Kidney (tissue), 22 donors: ENCODE measurements at regions of chr5 and their contacts with region 1.

Region 1: DNA sequence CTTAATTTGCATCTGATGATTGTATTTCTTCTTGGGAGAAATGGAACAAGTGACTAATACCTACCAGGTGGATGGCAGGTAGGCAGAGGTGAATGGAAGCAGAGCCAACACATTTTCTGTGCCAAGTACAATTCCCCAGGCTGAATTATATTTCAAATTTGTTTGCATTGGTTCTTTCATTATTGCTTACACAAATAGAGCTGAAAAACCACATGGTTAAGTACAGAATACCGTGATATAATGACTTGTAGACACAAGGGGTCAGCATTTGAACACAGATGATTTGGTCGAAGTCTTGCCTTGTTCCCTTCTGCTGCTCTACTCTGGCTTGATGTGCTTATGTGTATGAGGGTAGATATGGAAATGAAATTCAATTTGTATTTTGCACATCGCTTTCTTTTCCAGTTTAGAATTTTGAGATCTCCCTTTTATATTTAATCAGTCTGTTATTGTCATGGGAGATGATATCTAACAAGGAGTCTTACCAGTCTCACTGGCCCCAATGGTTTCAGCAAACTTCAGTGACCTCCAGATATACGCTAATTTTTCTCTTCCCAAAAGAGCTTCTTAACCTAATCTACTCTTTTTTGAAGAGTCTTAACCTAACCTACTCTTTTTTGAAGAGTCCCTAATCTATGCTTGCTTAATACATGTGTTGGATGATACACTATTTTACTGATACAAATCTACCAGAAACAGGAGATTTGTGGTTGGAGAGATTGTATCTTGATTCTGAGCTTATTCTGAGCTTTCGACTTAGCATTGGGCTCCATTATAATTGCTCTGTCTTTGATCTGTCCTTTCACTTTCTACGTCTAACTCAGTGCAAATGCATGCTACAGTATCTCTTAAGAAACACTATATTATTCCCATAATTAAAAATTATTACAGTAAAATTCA is 88.1 kb downstream of the PCSK1 start:
- DNase-seq: peak in 2 of 5 donors; percentile 44 to 62
- H3K4me3 ChIP-seq: no peak overlapping the region
- H3K27ac ChIP-seq: no peak overlapping the region
- H3K4me1 ChIP-seq: no peaks in the 10 kb centered on the region
- H3K27me3 ChIP-seq: no peaks in the 10 kb centered on the region
- CTCF ChIP-seq: peak; percentile 66

Region 2: DNA sequence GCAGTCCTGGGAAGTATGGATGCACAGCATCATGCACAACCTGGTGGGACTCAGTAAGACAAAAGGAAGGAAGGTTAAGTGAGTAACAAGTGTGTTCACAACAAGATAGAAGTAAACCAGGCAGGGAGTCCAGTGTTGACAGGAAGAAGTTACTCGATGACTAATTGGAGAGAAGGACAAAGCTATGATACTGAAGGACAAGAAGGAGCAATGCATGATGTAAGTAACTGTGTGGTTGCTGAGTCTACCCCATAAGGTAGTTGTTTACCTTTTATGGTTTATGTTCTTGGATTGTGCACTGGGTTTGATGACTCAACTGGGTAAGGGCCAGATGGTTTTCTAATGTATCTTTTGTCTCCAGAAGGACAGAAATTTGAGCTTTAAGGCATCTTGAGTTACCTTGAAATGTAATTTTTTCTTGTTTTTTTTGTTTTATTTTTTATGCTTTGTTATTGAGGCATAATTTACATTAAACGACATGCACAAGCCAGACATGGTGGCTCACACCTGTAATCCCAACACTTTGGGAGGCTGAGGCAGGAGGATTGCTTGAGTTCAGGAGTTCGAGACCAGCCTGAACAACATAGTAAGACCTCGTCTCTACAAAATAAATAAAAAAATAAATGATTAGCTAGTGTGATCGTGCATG is 228.1 kb after region 1 on chr5:
- intact Hi-C with region 1: no loop called
- DNase-seq: no peak
- H3K4me3 ChIP-seq: no peak overlapping the region
- H3K27ac ChIP-seq: no peak overlapping the region
- H3K4me1 ChIP-seq: no peaks in the 10 kb centered on the region
- H3K27me3 ChIP-seq: no peaks in the 10 kb centered on the region
- CTCF ChIP-seq: no peak

Region 3: DNA sequence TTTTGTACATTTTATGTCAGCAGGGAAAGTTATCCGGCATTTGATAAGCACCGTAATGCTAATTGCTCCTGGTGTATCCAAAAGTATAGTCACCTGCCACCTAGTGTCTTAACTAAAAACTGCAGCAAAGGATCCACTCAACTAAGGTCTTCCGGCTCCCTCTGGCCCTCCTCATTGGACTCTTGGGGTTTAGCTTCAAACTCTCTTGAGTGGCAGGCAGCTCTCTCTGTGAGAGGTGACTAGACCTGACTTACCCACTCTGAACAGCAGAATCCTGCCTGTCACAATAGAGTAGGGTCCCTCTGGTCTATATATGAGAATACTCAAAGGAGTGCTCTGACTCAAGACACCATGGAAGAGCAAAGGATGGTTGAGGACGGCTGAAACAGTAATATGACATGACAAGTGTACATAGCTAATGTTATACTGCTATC is 256.9 kb after region 1 on chr5:
- intact Hi-C with region 1: loop called (anchors 5 kb)
- DNase-seq: peak in 3 of 5 donors; percentile 32 to 83 (median 73)
- H3K4me3 ChIP-seq: no peak overlapping the region
- H3K27ac ChIP-seq: no peak overlapping the region
- H3K4me1 ChIP-seq: no peaks in the 10 kb centered on the region
- H3K27me3 ChIP-seq: no peaks in the 10 kb centered on the region
- CTCF ChIP-seq: peak; percentile 81

Region 4: DNA sequence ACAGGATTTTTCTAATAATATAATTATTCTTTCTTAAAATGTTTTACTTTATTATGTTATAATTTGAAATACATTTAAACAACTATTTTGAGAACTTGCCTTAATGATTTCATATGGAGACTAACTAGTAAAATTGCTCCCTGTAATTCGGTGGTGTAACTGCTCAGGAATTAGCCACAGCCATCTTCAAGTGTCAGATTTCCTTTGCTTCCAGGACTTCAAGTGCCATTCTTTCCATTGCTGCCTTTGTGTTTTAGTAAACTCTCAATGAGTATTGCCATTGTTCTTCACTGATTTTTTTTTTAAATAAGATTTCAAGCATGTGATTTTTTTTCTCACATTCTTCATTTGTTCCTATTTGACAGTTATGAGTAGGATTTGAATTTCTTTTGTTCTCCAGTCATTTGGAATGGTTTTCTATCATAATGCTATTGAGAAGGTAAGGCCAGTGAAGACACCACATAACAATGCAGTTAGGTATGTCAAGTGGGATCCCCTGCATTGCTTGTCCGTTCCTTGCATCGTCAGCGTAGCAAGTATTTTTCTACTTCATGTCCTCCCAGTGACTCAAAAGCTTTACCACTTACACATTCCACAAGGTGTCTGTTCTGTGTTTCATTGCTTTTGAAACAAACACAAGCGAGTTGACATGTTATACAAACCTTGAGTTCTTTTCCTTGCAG is 674.6 kb after region 1 on chr5:
- intact Hi-C with region 1: no loop called
- DNase-seq: peak in 1 of 5 donors; percentile 4
- H3K4me3 ChIP-seq: no peak overlapping the region
- H3K27ac ChIP-seq: no peak overlapping the region
- H3K4me1 ChIP-seq: no peaks in the 10 kb centered on the region
- H3K27me3 ChIP-seq: no peaks in the 10 kb centered on the region
- CTCF ChIP-seq: no peak